Naive thymus-derived CD4-positive, alpha-beta T cell (primary cell): ENCODE measurements at regions of chr9 and their contacts with region 1.

Region 1: GRCh38 chr9:73104342-73104741 is 47.3 kb upstream of the ANXA1 start:
- DNase-seq: no peak
- ATAC-seq: peak; percentile 37
- H3K4me3 ChIP-seq: no peak overlapping the region
- H3K4me3 Mint-ChIP-seq: no peak overlapping the region
- H3K27ac ChIP-seq: no peak overlapping the region
- H3K27ac Mint-ChIP-seq: no peak overlapping the region
- H3K4me1 ChIP-seq: no peaks in the 10 kb centered on the region
- H3K4me1 Mint-ChIP-seq: peaks cover 0 to 3% (median 0%) of the 10 kb centered on the region in 7 donors
- H3K27me3 ChIP-seq: no peaks in the 10 kb centered on the region
- H3K27me3 Mint-ChIP-seq: peaks cover 0 to 23% (median 0%) of the 10 kb centered on the region in 5 donors

Region 2: GRCh38 chr9:73116031-73116430 is 11.7 kb after region 1 on chr9:
- CTCF ChIA-PET with region 1: interaction called, 3 read pairs
- POLR2A ChIA-PET with region 1: no interaction called
- intact Hi-C with region 1: loop called in 1 of 2 experiments (anchors 1 kb)
- DNase-seq: no peak
- ATAC-seq: no peak
- H3K4me3 ChIP-seq: no peak overlapping the region
- H3K4me3 Mint-ChIP-seq: no peak overlapping the region
- H3K27ac ChIP-seq: no peak overlapping the region
- H3K27ac Mint-ChIP-seq: no peak overlapping the region
- H3K4me1 ChIP-seq: peaks cover 0 to 19% of the 10 kb centered on the region in 2 donors
- H3K4me1 Mint-ChIP-seq: peaks cover 19 to 48% (median 38%) of the 10 kb centered on the region in 7 donors
- H3K27me3 ChIP-seq: no peaks in the 10 kb centered on the region
- H3K27me3 Mint-ChIP-seq: no peaks in the 10 kb centered on the region

Region 3: GRCh38 chr9:73597771-73598170 is 493.4 kb after region 1 on chr9:
- CTCF ChIA-PET with region 1: no interaction called
- POLR2A ChIA-PET with region 1: no interaction called
- intact Hi-C with region 1: no loop called
- DNase-seq: no peak
- ATAC-seq: no peak
- H3K4me3 ChIP-seq: no peak overlapping the region
- H3K4me3 Mint-ChIP-seq: no peak overlapping the region
- H3K27ac ChIP-seq: no peak overlapping the region
- H3K27ac Mint-ChIP-seq: no peak overlapping the region
- H3K4me1 ChIP-seq: no peaks in the 10 kb centered on the region
- H3K4me1 Mint-ChIP-seq: no peaks in the 10 kb centered on the region
- H3K27me3 ChIP-seq: no peaks in the 10 kb centered on the region
- H3K27me3 Mint-ChIP-seq: no peaks in the 10 kb centered on the region